CD4-positive, alpha-beta memory T cell (primary cell): ENCODE measurements at regions of chr11 and their contacts with region 1.

Region 1: GRCh38 chr11:77411717-77412441 is 62.0 kb downstream of the PAK1 start:
- DNase-seq: peak; percentile 73 to 78 (median 75)
- H3K4me3 ChIP-seq: peak overlapping the region; percentile 30 to 89
- H3K4me3 Mint-ChIP-seq: peak overlapping the region; percentile 82 to 97 (median 92)
- H3K27ac ChIP-seq: peak overlapping the region; percentile 48
- H3K27ac Mint-ChIP-seq: peak overlapping the region; percentile 65 to 93 (median 86)
- H3K4me1 ChIP-seq: peaks cover 19% of the 10 kb centered on the region
- H3K4me1 Mint-ChIP-seq: peaks cover 23 to 35% (median 29%) of the 10 kb centered on the region in 4 donors
- H3K27me3 ChIP-seq: no peaks in the 10 kb centered on the region
- H3K27me3 Mint-ChIP-seq: no peaks in the 10 kb centered on the region

Region 2: DNA sequence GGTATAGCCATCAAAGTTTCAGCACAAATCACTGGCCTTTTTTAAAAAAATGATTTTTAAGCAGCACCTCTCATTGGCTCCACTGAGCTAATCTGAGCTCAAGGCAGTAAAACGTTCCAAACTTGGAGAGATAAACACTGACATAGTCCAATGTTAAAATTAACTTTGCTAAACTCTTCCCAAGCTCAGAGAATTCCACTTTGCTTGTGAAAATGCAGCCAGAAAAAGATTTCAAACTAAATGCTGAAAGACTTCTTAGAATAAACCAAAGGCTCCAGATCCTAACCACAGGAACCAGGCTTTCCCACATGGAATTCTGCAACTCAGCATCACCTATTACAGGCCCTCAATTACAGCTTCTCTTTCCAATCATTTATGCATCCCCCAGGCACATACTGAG is 25.7 kb before region 1 on chr11:
- CTCF ChIA-PET with region 1: no interaction called
- POLR2A ChIA-PET with region 1: no interaction called
- intact Hi-C with region 1: no loop called
- DNase-seq: no peak
- H3K4me3 ChIP-seq: no peak overlapping the region
- H3K4me3 Mint-ChIP-seq: no peak overlapping the region
- H3K27ac ChIP-seq: no peak overlapping the region
- H3K27ac Mint-ChIP-seq: no peak overlapping the region
- H3K4me1 ChIP-seq: no peaks in the 10 kb centered on the region
- H3K4me1 Mint-ChIP-seq: peaks cover 0 to 2% (median 0%) of the 10 kb centered on the region in 4 donors
- H3K27me3 ChIP-seq: no peaks in the 10 kb centered on the region
- H3K27me3 Mint-ChIP-seq: no peaks in the 10 kb centered on the region

Region 3: GRCh38 chr11:77442394-77443053 is 30.6 kb after region 1 on chr11:
- CTCF ChIA-PET with region 1: no interaction called
- POLR2A ChIA-PET with region 1: no interaction called
- intact Hi-C with region 1: no loop called
- DNase-seq: no peak
- H3K4me3 ChIP-seq: no peak overlapping the region
- H3K4me3 Mint-ChIP-seq: no peak overlapping the region
- H3K27ac ChIP-seq: no peak overlapping the region
- H3K27ac Mint-ChIP-seq: no peak overlapping the region
- H3K4me1 ChIP-seq: no peaks in the 10 kb centered on the region
- H3K4me1 Mint-ChIP-seq: no peaks in the 10 kb centered on the region
- H3K27me3 ChIP-seq: no peaks in the 10 kb centered on the region
- H3K27me3 Mint-ChIP-seq: peaks cover 0 to 5% of the 10 kb centered on the region in 2 donors

Region 4: GRCh38 chr11:77473801-77474683 is 62.2 kb after region 1 on chr11 and contains the start of gene PAK1:
- CTCF ChIA-PET with region 1: interaction called, 3 read pairs
- POLR2A ChIA-PET with region 1: interaction called, 4 read pairs
- intact Hi-C with region 1: loop called (anchors 2 kb)
- DNase-seq: peak; percentile 87 to 96 (median 89)
- H3K4me3 ChIP-seq: peak within 1 kb of the TSS; percentile 42 to 49
- H3K4me3 Mint-ChIP-seq: peak within 1 kb of the TSS; percentile 87 to 97 (median 92)
- H3K27ac ChIP-seq: peak within 1 kb of the TSS; percentile 49
- H3K27ac Mint-ChIP-seq: peak within 1 kb of the TSS; percentile 96 to 100 (median 99)
- H3K4me1 ChIP-seq: peaks cover 11% of the 10 kb centered on the region
- H3K4me1 Mint-ChIP-seq: peaks cover 7 to 14% (median 12%) of the 10 kb centered on the region in 4 donors
- H3K27me3 ChIP-seq: no peaks in the 10 kb centered on the region
- H3K27me3 Mint-ChIP-seq: peaks cover 3 to 11% of the 10 kb centered on the region in 2 donors
- total RNA-seq, gene PAK1: 9.8 to 10.4 TPM